K562 (cell line): ENCODE measurements at regions of chr6 and their contacts with region 1.

Region 1: DNA sequence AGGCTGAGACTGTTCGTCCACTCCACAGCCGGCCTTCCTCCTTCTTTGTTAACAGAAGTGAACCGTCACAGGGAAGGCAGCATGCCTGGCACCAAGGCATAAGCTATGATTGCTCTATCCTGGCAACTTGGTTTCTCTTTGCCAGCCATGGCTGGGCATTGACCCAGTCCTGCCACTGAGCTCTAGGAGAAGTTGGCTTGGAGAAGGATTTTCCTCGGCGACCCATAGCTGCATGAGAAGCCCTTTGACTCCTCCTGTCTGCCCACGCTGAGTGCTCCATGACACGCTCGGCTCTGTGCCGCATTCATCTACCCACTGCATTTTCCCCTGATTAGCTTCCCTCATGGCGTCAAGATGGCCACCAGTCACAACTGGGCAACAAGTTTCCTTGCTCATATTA is 111.8 kb upstream of the EXOC2 start:
- DNase-seq: no peak
- ATAC-seq: no peak
- H3K4me3 ChIP-seq: no peak overlapping the region
- H3K27ac ChIP-seq: no peak overlapping the region
- H3K4me1 ChIP-seq: no peaks in the 10 kb centered on the region
- H3K27me3 ChIP-seq: peaks cover 11 to 30% of the 10 kb centered on the region in 2 experiments
- CTCF ChIP-seq: no peak
- EP300 ChIP-seq: no peak
- POLR2A ChIP-seq: no peak
- RAD21 ChIP-seq: no peak

Region 2: GRCh38 chr6:894274-894673 is 89.5 kb after region 1 on chr6:
- CTCF ChIA-PET with region 1: no interaction called
- POLR2A ChIA-PET with region 1: no interaction called
- in situ Hi-C with region 1: no loop called
- intact Hi-C with region 1: loop called (anchors 10 kb)
- DNase-seq: peak in 1 of 4 experiments; percentile 25
- ATAC-seq: peak; percentile 67
- H3K4me3 ChIP-seq: no peak overlapping the region
- H3K27ac ChIP-seq: no peak overlapping the region
- H3K4me1 ChIP-seq: no peaks in the 10 kb centered on the region
- H3K27me3 ChIP-seq: peaks cover 12 to 38% of the 10 kb centered on the region in 2 experiments; a peak in 4 of 5 replicates
- CTCF ChIP-seq: peak; percentile 35 to 60 (median 55); a peak in 5 of 6 replicates
- EP300 ChIP-seq: no peak
- POLR2A ChIP-seq: no peak
- RAD21 ChIP-seq: peak; percentile 24 to 32